Uterus (tissue), 4 donors: ENCODE measurements at regions of chr20 and their contacts with region 1.

Region 1: GRCh38 chr20:38645980-38646858 is 44.6 kb downstream of the ARHGAP40 start:
- DNase-seq: peak; percentile 28 to 60
- H3K4me3 ChIP-seq: no peak overlapping the region
- H3K27ac ChIP-seq: no peak overlapping the region
- H3K4me1 ChIP-seq: no peaks in the 10 kb centered on the region
- H3K27me3 ChIP-seq: peaks cover 2 to 9% of the 10 kb centered on the region in 2 donors
- CTCF ChIP-seq: peak; percentile 72 to 96 (median 85)
- POLR2A ChIP-seq: no peak

Region 2: DNA sequence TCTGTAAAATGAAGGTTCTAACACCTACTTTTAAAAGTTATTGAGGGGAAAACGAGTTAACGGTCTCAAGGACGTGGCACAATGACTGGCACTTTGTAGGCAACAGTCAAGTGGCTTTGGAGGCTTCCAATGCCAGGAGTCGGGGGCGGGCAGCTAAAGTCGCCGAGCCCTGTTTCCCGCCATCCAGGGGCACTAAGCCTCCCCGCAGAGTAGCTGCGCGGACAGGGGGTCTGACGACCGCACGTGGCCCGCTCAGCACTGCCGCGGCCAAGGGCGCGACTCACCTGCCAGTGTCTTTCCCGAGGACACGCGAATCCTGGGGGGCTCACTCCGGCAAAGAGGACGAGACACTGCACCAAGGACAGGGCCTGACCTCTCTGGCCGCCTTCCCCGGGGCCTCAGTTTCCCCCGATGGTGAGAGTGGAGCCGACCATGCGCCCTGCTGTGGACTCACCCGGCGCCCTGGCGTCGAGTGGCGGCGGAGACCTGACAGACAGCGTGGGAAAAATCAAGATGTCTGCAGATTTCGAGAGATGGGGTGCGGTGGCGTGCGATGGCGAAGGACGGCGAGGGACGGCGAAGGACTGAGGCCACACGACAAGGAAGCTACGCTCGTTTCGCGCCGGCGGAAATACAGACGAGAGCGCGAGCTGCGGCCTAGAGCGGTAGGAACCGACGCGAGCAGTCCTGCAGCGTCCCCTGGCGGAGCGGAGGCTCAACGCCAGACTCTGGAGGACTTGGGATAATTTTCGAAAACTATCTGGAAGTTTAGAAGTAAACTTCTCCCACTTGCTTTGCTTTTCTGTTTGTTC is 211.3 kb before region 1 on chr20 and contains the start of gene SNHG17:
- intact Hi-C with region 1: no loop called
- DNase-seq: peak; percentile 86 to 88
- H3K4me3 ChIP-seq: peak within 1 kb of the TSS; percentile 65 to 69
- H3K27ac ChIP-seq: peak within 1 kb of the TSS; percentile 72
- H3K4me1 ChIP-seq: no peaks in the 10 kb centered on the region
- H3K27me3 ChIP-seq: no peaks in the 10 kb centered on the region
- CTCF ChIP-seq: peak; percentile 99 to 100 (median 100)
- POLR2A ChIP-seq: peak; percentile 35 to 72
- total RNA-seq, gene SNHG17: 0.59 to 58.9 (median 9.3) TPM

Region 3: GRCh38 chr20:38581013-38581412 is 65.2 kb before region 1 on chr20 and contains the start of gene ADIG:
- intact Hi-C with region 1: no loop called
- DNase-seq: no peak
- H3K4me3 ChIP-seq: no peak within 1 kb of the TSS
- H3K27ac ChIP-seq: no peak within 1 kb of the TSS
- H3K4me1 ChIP-seq: no peaks in the 10 kb centered on the region
- H3K27me3 ChIP-seq: no peaks in the 10 kb centered on the region
- CTCF ChIP-seq: no peak
- POLR2A ChIP-seq: no peak
- total RNA-seq, gene ADIG: not detected

Region 4: DNA sequence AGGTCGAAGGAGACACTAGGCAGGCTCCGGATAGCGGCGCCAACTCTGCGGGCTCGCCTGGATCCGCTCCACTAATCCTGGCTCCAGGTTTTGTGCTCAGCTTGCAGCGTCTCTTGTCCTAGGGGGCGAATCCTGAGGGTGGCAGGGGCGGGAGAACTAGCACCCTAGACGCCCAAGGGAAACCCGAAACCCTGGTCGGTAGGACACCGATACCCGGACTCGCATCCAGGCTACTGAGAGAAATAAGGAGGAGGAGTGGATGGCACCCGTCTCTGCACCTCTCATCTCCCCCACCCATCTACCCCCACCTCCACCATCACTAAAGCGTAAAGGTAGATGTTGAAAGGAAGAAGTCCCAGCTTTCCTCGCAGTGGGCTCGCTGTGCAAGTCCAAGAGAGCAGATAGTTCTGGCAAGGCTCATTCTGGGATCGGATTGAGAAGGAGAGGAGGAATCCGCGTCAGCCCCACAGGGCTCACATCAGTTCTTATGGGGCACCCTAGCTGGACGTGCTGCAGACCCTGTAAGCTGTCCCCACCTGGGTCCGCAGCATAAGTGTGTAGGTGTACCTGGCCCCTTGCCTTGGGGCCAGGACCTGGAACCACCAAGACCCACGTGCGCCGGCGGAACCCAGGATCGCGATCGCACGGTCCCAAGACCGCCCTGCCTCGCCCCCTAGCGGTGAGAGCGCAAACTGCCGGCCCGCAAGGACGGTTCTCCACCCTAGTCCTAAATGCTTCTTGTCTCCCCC is 84.9 kb after region 1 on chr20:
- intact Hi-C with region 1: loop called (anchors 10 kb)
- DNase-seq: peak; percentile 39 to 49
- H3K4me3 ChIP-seq: no peak overlapping the region
- H3K27ac ChIP-seq: no peak overlapping the region
- H3K4me1 ChIP-seq: peaks cover 0 to under 1% of the 10 kb centered on the region in 2 donors
- H3K27me3 ChIP-seq: peaks cover 28 to 69% of the 10 kb centered on the region in 2 donors
- CTCF ChIP-seq: peak; percentile 61 to 84 (median 68)
- POLR2A ChIP-seq: no peak